Left ventricle myocardium inferior (tissue), 1 donor: ENCODE measurements at regions of chr12 and their contacts with region 1.

Region 1: DNA sequence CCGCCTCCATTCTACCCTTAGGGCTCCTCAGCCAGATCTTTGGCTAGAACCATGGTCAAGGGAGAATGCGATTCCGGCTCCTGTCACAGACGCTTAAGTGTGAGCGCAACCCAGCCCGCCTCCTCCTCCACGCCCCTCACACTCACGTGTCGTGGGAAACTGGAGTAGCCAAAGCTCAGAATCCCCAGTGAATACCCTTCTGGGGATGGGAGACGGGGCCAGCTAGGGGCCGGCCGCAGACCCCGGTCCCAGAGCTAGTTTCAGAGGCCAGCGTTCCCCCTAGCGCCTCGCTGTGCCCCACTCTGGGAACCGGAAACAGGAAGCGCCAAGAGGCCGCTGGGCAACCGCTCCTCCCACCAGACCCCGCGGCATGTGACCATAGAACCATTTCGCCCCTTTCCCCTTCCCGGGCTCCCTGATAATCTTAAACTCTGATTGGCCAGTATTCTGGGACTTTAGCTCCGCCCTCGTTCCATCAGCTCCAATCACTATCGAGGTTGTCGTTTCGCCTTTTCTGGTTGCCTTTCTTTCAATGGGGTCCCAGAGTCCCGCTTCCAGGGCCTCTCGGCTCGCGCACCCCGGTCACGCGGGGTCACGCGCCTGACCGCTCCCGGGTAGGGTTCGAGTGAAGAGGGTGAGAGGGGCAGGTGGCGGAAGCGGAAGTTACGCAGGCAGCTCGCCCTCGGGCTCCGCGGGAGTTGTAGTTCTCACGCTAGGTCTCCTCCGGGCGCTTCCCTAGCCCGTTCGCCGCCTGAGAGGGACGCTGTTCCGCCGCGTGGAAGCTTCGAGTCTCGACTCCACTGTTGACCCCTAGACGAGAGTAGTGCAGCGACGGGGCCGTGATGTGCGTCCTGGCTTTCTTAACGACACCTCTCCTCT is at the start of gene M6PR:
- DNase-seq: peak; percentile 91
- H3K4me3 ChIP-seq: peak within 1 kb of the TSS; percentile 78
- H3K27ac ChIP-seq: peak within 1 kb of the TSS; percentile 98
- H3K4me1 ChIP-seq: peaks cover 51% of the 10 kb centered on the region
- H3K27me3 ChIP-seq: no peaks in the 10 kb centered on the region
- CTCF ChIP-seq: peak; percentile 69
- total RNA-seq, gene M6PR: 94.2 TPM

Region 2: DNA sequence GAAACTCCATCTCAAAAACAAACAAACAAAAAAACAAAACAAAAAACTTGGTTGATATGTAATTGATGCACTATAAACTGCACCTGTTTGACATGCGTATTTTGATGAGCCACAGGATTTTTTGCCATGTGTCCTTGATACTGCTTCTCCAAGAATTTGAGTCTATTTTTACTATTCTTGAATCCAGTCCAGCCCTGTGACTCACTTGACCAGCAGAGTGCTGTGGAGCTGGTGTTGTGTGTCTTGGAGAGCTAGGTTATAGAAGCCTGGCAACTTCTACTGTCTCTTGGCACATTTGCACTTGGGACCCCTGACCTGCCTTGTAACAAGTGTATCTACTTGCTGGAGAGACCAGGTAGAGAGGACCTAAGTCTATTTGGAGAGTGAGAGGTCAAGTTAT is 91.7 kb after region 1 on chr12:
- intact Hi-C with region 1: loop called (anchors 5 kb)
- DNase-seq: no peak
- H3K4me3 ChIP-seq: no peak overlapping the region
- H3K27ac ChIP-seq: peak overlapping the region; percentile 1
- H3K4me1 ChIP-seq: peaks cover 15% of the 10 kb centered on the region
- H3K27me3 ChIP-seq: no peaks in the 10 kb centered on the region
- CTCF ChIP-seq: no peak